ENCODE measurements at regions of chr11 and their contacts with region 1.

Region 1: GRCh38 chr11:25981998-25982397 is 349.9 kb upstream of the ANO3 start:
- DNase-seq: peak; percentile 72
- H3K4me3 ChIP-seq: no peak overlapping the region
- H3K27ac ChIP-seq: no peak overlapping the region
- H3K4me1 ChIP-seq: no peaks in the 10 kb centered on the region
- H3K27me3 ChIP-seq: no peaks in the 10 kb centered on the region
- CTCF ChIP-seq: peak; percentile 32 to 38
- POLR2A ChIP-seq: no peak

Region 2: GRCh38 chr11:25992294-25992693 is 10.3 kb after region 1 on chr11:
- CTCF ChIA-PET with region 1: interaction called, 21 read pairs
- POLR2A ChIA-PET with region 1: no interaction called
- dilution Hi-C with region 1: no loop called
- intact Hi-C with region 1: no loop called
- DNase-seq: no peak
- H3K4me3 ChIP-seq: no peak overlapping the region
- H3K27ac ChIP-seq: no peak overlapping the region
- H3K4me1 ChIP-seq: no peaks in the 10 kb centered on the region
- H3K27me3 ChIP-seq: no peaks in the 10 kb centered on the region
- CTCF ChIP-seq: no peak
- POLR2A ChIP-seq: no peak

Region 3: DNA sequence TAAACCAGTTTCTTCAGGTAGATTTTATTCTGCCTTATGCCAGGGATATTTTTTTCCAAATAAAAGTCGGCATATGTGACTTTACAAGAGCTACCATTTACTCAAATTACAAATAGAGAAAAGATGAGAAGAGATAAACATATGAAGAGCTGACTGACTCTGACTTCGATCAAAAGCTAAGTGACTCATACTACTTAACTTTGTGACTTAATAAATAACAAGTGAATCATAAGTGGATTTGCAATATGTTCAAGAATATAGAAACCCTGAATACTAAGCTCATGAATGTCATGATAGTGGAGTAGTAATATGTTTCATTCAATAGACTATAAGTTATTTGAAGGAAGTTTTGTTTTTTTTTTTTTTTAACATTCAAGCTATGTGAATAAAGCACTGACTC is 219.4 kb after region 1 on chr11:
- CTCF ChIA-PET with region 1: interaction called, 12 read pairs
- POLR2A ChIA-PET with region 1: no interaction called
- dilution Hi-C with region 1: no loop called
- intact Hi-C with region 1: no loop called
- DNase-seq: no peak
- H3K4me3 ChIP-seq: no peak overlapping the region
- H3K27ac ChIP-seq: no peak overlapping the region
- H3K4me1 ChIP-seq: no peaks in the 10 kb centered on the region
- H3K27me3 ChIP-seq: no peaks in the 10 kb centered on the region
- CTCF ChIP-seq: no peak
- POLR2A ChIP-seq: no peak

Region 4: DNA sequence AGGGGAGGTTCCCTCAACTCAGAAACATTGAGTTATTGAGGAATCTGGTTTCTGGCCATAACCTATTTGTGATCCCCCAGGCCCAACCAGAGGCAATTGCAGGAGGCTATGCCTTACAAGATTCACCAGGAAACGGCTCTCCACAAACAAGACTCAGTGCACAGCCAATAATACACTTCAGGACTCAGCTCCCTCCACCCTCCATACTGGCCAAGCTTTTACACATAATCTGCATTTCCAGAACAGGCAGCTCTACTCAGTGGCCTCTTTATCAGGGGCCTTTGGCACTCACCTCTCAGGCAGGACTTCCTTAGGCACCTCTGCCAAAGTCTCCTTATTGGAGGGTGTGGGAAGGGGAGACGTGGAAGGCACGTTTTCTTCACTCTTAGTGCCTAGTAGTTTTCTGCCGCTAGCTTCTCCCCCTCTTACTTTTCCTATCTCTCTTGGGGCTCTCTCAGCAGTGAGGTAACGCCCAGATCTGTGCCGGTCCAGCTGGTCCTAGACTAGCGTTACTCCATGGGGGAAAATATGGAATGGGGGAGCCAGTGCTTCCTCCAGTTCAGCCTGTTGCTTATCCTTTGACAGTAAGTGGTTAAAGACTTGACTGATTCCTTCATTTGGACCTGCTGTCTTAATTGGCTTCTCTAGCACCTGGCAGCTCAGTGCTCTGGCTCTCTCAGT is 287.1 kb after region 1 on chr11:
- CTCF ChIA-PET with region 1: interaction called, 88 read pairs
- POLR2A ChIA-PET with region 1: no interaction called
- dilution Hi-C with region 1: no loop called
- intact Hi-C with region 1: no loop called
- DNase-seq: no peak
- H3K4me3 ChIP-seq: no peak overlapping the region
- H3K27ac ChIP-seq: no peak overlapping the region
- H3K4me1 ChIP-seq: no peaks in the 10 kb centered on the region
- H3K27me3 ChIP-seq: no peaks in the 10 kb centered on the region
- CTCF ChIP-seq: no peak
- POLR2A ChIP-seq: no peak

Region 5: DNA sequence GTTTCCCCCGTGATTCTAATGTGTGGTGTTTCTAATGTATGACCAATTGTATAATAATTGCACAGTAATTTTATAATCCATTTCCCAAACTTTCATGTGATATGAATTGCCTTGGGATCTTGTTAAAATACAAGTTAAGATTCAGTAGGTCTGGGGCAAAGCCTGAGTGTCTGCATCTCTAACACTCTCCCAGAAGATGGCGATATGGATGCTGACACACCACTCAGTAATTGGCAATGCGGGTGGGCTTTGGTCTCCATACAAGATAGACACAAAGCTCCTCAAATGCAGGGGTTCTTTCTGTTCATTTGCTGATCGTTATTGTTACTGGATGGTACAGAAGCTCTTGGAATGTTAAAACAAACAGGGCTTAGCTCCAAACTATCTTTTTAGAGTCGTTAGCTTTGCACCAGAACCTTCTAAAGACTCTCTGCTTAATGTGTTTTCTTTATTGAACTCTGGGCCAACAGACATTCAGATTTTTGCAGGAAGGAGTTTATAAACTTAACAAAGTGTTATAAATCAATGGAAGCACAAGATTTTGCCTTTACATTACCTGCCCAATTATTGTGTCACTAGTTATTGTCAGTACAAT is 304.6 kb after region 1 on chr11:
- CTCF ChIA-PET with region 1: interaction called, 95 read pairs
- POLR2A ChIA-PET with region 1: no interaction called
- dilution Hi-C with region 1: no loop called
- intact Hi-C with region 1: no loop called
- DNase-seq: peak; percentile 37
- H3K4me3 ChIP-seq: no peak overlapping the region
- H3K27ac ChIP-seq: no peak overlapping the region
- H3K4me1 ChIP-seq: peaks cover 7% of the 10 kb centered on the region
- H3K27me3 ChIP-seq: no peaks in the 10 kb centered on the region
- CTCF ChIP-seq: peak; percentile 21 to 59
- POLR2A ChIP-seq: no peak

Measured in endothelial cell of umbilical vein (primary cell).